Activated CD4-positive, alpha-beta memory T cell treated with anti-CD3 and anti-CD28 coated beads, Interleukin-2, amount 10 ng/mL, durations not matched to agents 7 days and 5 days (primary cell): ENCODE measurements at regions of chr9 and their contacts with region 1.

Region 1: GRCh38 chr9:130461218-130461630 is 16.5 kb downstream of the ASS1 start:
- DNase-seq: peak; percentile 68
- H3K4me3 Mint-ChIP-seq: no peak overlapping the region
- H3K27ac Mint-ChIP-seq: no peak overlapping the region
- H3K4me1 Mint-ChIP-seq: no peaks in the 10 kb centered on the region
- H3K27me3 Mint-ChIP-seq: peaks cover 2% of the 10 kb centered on the region

Region 2: GRCh38 chr9:130331573-130331972 is 129.7 kb before region 1 on chr9:
- CTCF ChIA-PET with region 1: no interaction called
- POLR2A ChIA-PET with region 1: no interaction called
- DNase-seq: no peak
- H3K4me3 Mint-ChIP-seq: no peak overlapping the region
- H3K27ac Mint-ChIP-seq: no peak overlapping the region
- H3K4me1 Mint-ChIP-seq: no peaks in the 10 kb centered on the region
- H3K27me3 Mint-ChIP-seq: peaks cover 17% of the 10 kb centered on the region

Region 3: DNA sequence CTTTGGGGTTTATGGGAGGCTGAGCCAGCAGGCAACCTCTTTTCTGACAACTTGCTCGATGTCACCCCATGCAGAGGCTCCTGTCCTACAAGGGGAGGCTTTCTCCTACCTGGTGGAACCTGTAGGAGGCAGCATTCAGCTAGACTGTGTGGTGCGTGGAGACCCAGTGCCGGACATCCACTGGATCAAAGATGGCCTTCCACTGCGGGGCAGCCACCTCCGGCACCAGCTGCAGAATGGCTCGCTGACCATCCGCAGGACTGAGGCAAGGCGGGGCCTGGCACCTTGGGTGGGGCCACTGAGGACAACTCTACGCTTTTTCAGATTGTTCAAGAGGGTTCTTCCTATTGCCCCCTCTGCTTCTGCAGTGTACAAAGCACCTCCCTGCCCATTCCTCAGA is 52.6 kb before region 1 on chr9:
- CTCF ChIA-PET with region 1: no interaction called
- POLR2A ChIA-PET with region 1: no interaction called
- DNase-seq: no peak
- H3K4me3 Mint-ChIP-seq: no peak overlapping the region
- H3K27ac Mint-ChIP-seq: no peak overlapping the region
- H3K4me1 Mint-ChIP-seq: no peaks in the 10 kb centered on the region
- H3K27me3 Mint-ChIP-seq: peaks cover 12% of the 10 kb centered on the region

Region 4: GRCh38 chr9:130478736-130479575 is 17.7 kb after region 1 on chr9:
- CTCF ChIA-PET with region 1: no interaction called
- POLR2A ChIA-PET with region 1: no interaction called
- DNase-seq: no peak
- H3K4me3 Mint-ChIP-seq: no peak overlapping the region
- H3K27ac Mint-ChIP-seq: no peak overlapping the region
- H3K4me1 Mint-ChIP-seq: no peaks in the 10 kb centered on the region
- H3K27me3 Mint-ChIP-seq: peaks cover 14% of the 10 kb centered on the region

Region 5: DNA sequence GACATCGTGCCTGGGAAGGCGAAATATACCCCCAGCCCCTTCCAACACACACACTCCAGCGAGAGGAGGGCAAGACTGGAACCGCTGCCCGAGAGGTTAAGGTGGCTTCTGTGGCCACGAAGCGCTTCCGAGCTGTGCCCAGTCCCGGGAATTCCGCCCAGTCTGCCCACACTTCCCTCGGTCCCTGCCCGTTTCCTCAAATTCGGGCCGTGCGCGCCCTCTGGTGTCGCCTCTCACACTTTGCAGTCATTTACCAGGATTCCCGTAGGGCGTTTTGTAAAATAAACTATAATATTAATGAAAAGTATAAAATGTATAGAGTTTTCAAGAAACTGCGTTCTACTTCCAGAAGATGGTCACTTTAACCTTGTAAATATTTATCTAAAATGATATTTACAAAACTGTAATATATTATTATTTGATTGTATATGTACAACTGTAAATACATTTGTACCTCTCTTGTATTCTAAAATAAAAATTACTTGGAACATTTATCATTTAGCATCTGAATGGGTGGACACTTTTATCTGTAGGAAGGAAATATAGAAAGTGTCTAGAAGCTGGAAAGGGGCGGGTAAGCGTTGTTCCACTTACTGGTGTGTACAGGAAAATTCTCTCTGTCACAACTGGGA is 221.4 kb after region 1 on chr9:
- CTCF ChIA-PET with region 1: interaction called, 26 read pairs
- POLR2A ChIA-PET with region 1: interaction called, 3 read pairs
- DNase-seq: peak; percentile 60
- H3K4me3 Mint-ChIP-seq: peak overlapping the region; percentile 82
- H3K27ac Mint-ChIP-seq: no peak overlapping the region
- H3K4me1 Mint-ChIP-seq: peaks cover 9% of the 10 kb centered on the region
- H3K27me3 Mint-ChIP-seq: peaks cover 21% of the 10 kb centered on the region